MCF 10A (cell line): ENCODE measurements at regions of chr11 and their contacts with region 1.

Region 1: GRCh38 chr11:71977743-71978418 is 20.8 kb upstream of the IL18BP start:
- DNase-seq: peak; percentile 66
- H3K4me3 Mint-ChIP-seq: no peak overlapping the region
- H3K27ac Mint-ChIP-seq: no peak overlapping the region
- H3K4me1 Mint-ChIP-seq: no peaks in the 10 kb centered on the region
- H3K27me3 Mint-ChIP-seq: no peaks in the 10 kb centered on the region
- CTCF ChIP-seq: peak; percentile 67

Region 2: GRCh38 chr11:71955898-71956456 is 21.9 kb before region 1 on chr11:
- CTCF ChIA-PET with region 1: interaction called, 23 read pairs
- POLR2A ChIA-PET with region 1: interaction called, 3 read pairs
- intact Hi-C with region 1: no loop called
- DNase-seq: no peak
- H3K4me3 Mint-ChIP-seq: no peak overlapping the region
- H3K27ac Mint-ChIP-seq: no peak overlapping the region
- H3K4me1 Mint-ChIP-seq: peaks cover 5% of the 10 kb centered on the region
- H3K27me3 Mint-ChIP-seq: no peaks in the 10 kb centered on the region
- CTCF ChIP-seq: no peak

Region 3: GRCh38 chr11:71998662-71999310 is 20.9 kb after region 1 on chr11 and contains the start of gene IL18BP:
- CTCF ChIA-PET with region 1: interaction called, 28 read pairs
- POLR2A ChIA-PET with region 1: no interaction called
- intact Hi-C with region 1: no loop called
- DNase-seq: no peak
- H3K4me3 Mint-ChIP-seq: no peak within 1 kb of the TSS
- H3K27ac Mint-ChIP-seq: peak within 1 kb of the TSS; percentile 13
- H3K4me1 Mint-ChIP-seq: peaks cover 5% of the 10 kb centered on the region
- H3K27me3 Mint-ChIP-seq: no peaks in the 10 kb centered on the region
- CTCF ChIP-seq: no peak
- total RNA-seq, gene IL18BP: 5.1 and 8.2 TPM in 2 replicates

Region 4: DNA sequence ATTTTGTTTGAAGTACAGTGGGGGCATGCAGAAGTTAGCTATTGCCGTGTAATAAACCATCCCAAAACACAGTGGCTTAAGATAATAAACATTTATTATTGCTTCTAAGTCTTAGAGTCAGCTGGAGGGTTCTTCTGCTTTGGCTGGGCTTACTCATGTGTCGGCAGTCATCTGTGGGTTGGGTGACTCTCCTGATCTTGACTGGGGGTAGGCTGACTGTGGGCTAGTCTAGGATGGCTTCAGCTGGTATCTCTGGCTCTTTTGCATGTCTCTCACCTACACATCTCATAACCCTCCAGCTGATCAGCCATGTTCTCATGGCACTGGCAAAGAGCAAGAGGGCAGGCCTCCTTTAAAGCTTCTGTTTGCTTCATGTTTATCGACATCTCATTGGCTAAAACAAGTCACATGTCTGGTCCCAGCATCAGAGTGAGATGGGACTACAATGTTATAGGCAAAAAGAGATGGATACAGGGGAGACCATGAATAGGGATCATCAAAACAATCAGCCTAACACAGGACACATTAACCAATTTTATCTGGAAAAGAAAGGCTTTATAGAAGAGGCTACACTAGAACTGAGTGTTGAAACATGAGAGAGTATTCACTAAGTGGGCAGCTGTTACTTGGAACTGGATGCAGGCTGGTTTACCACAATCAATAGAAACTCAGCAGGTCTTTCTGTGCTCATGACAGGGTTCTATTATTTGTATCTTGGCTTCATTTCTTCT is 107.9 kb after region 1 on chr11:
- CTCF ChIA-PET with region 1: interaction called, 19 read pairs
- POLR2A ChIA-PET with region 1: no interaction called
- intact Hi-C with region 1: no loop called
- DNase-seq: no peak
- H3K4me3 Mint-ChIP-seq: no peak overlapping the region
- H3K27ac Mint-ChIP-seq: no peak overlapping the region
- H3K4me1 Mint-ChIP-seq: peaks cover 23% of the 10 kb centered on the region
- H3K27me3 Mint-ChIP-seq: no peaks in the 10 kb centered on the region
- CTCF ChIP-seq: no peak

Region 5: GRCh38 chr11:72238040-72238450 is 260.2 kb after region 1 on chr11:
- CTCF ChIA-PET with region 1: interaction called, 5 read pairs
- POLR2A ChIA-PET with region 1: interaction called, 3 read pairs
- intact Hi-C with region 1: loop called (anchors 5 kb)
- DNase-seq: peak; percentile 60
- H3K4me3 Mint-ChIP-seq: no peak overlapping the region
- H3K27ac Mint-ChIP-seq: no peak overlapping the region
- H3K4me1 Mint-ChIP-seq: peaks cover 9% of the 10 kb centered on the region
- H3K27me3 Mint-ChIP-seq: no peaks in the 10 kb centered on the region
- CTCF ChIP-seq: peak; percentile 60

Region 6: GRCh38 chr11:72446902-72447769 is 469.3 kb after region 1 on chr11:
- CTCF ChIA-PET with region 1: interaction called, 19 read pairs
- POLR2A ChIA-PET with region 1: no interaction called
- intact Hi-C with region 1: no loop called
- DNase-seq: peak; percentile 66
- H3K4me3 Mint-ChIP-seq: no peak overlapping the region
- H3K27ac Mint-ChIP-seq: no peak overlapping the region
- H3K4me1 Mint-ChIP-seq: no peaks in the 10 kb centered on the region
- H3K27me3 Mint-ChIP-seq: no peaks in the 10 kb centered on the region
- CTCF ChIP-seq: peak; percentile 72